ENCODE measurements at regions of chr16 and their contacts with region 1.

Region 1: GRCh38 chr16:57244767-57245471 is at the start of gene ARL2BP:
- DNase-seq: peak; percentile 99
- H3K4me3 Mint-ChIP-seq: peak within 1 kb of the TSS; percentile 89
- H3K27ac Mint-ChIP-seq: peak within 1 kb of the TSS; percentile 88
- H3K4me1 Mint-ChIP-seq: peaks cover 16% of the 10 kb centered on the region
- H3K27me3 Mint-ChIP-seq: no peaks in the 10 kb centered on the region
- total RNA-seq, gene ARL2BP: 16.4 to 16.9 TPM

Region 2: GRCh38 chr16:57084257-57084770 is 160.6 kb before region 1 on chr16:
- CTCF ChIA-PET with region 1: no interaction called
- POLR2A ChIA-PET with region 1: no interaction called
- intact Hi-C with region 1: loop called (anchors 2 kb)
- DNase-seq: peak; percentile 85
- H3K4me3 Mint-ChIP-seq: no peak overlapping the region
- H3K27ac Mint-ChIP-seq: no peak overlapping the region
- H3K4me1 Mint-ChIP-seq: peaks cover 6% of the 10 kb centered on the region
- H3K27me3 Mint-ChIP-seq: no peaks in the 10 kb centered on the region

Region 3: DNA sequence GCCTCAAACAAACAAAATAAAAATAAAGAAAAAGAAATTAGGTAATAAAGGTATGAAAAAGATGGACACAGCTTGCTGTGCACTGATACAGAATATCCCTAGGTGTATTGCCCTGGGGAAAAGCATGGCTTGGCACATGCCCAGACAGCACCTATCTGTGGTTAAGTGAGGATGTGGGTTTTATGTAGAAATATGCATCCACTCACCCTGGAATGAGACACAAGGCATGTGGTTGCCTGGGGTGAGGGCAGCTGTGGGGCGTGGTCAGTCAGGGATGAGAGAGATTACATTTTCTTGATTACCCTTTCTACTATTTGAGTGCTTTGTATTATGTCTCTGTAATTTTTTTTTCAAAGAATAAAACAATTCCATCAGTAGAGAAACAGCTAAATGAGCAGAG is 32.7 kb after region 1 on chr16:
- CTCF ChIA-PET with region 1: no interaction called
- POLR2A ChIA-PET with region 1: no interaction called
- intact Hi-C with region 1: loop called (anchors 5 kb)
- DNase-seq: peak; percentile 84
- H3K4me3 Mint-ChIP-seq: peak overlapping the region; percentile 20
- H3K27ac Mint-ChIP-seq: peak overlapping the region; percentile 5
- H3K4me1 Mint-ChIP-seq: peaks cover 22% of the 10 kb centered on the region
- H3K27me3 Mint-ChIP-seq: no peaks in the 10 kb centered on the region

Region 4: DNA sequence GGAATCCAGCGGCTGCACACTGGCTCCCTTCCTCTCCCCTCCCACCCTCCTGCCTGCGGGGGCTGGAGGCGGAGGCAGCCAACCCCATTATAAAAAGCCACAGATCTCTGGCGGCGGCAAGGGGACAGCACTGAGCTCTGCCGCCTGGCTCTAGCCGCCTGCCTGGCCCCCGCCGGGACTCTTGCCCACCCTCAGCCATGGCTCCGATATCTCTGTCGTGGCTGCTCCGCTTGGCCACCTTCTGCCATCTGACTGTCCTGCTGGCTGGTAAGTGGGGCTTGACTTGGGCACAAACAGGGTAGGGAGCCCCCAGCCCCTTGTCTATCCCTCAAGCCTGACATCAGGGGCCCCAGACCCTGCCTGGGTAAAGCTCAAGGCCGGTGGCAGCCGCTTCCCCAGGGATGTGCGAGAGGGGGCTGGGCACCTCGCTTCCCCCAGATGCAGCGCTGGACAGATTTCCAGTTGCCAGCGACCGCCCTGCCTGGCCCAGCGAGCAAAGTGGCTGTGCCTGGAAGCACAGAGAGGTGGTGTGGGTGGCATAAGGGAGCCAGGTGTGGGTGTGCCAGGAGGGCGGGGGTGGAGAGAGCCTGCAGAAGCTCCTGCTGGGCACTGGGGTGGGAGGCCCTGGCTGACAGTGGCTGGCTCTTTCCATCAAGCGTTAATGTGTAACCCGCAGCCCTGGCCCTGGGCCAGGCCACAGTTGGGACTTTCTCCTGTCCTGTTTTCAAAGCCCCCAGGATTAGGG is 127.6 kb after region 1 on chr16 and contains the start of gene CX3CL1:
- CTCF ChIA-PET with region 1: no interaction called
- POLR2A ChIA-PET with region 1: no interaction called
- intact Hi-C with region 1: no loop called
- DNase-seq: no peak
- H3K4me3 Mint-ChIP-seq: no peak within 1 kb of the TSS
- H3K27ac Mint-ChIP-seq: no peak within 1 kb of the TSS
- H3K4me1 Mint-ChIP-seq: peaks cover 9% of the 10 kb centered on the region
- H3K27me3 Mint-ChIP-seq: peaks cover 5% of the 10 kb centered on the region
- total RNA-seq, gene CX3CL1: not detected

Region 5: GRCh38 chr16:57422026-57422944 is 177.4 kb after region 1 on chr16:
- CTCF ChIA-PET with region 1: interaction called, 4 read pairs
- POLR2A ChIA-PET with region 1: interaction called, 3 read pairs
- intact Hi-C with region 1: loop called (anchors 1 kb)
- DNase-seq: no peak
- H3K4me3 Mint-ChIP-seq: no peak overlapping the region
- H3K27ac Mint-ChIP-seq: no peak overlapping the region
- H3K4me1 Mint-ChIP-seq: peaks cover 6% of the 10 kb centered on the region
- H3K27me3 Mint-ChIP-seq: no peaks in the 10 kb centered on the region

Region 6: GRCh38 chr16:57447186-57447962 is 202.5 kb after region 1 on chr16 and contains the starts of genes CIAPIN1 and COQ9:
- CTCF ChIA-PET with region 1: no interaction called
- POLR2A ChIA-PET with region 1: interaction called, 3 read pairs
- intact Hi-C with region 1: loop called (anchors 2 kb)
- DNase-seq: peak; percentile 96
- H3K4me3 Mint-ChIP-seq: peak within 1 kb of the TSS; percentile 91
- H3K27ac Mint-ChIP-seq: peak within 1 kb of the TSS; percentile 70
- H3K4me1 Mint-ChIP-seq: peaks cover 28% of the 10 kb centered on the region
- H3K27me3 Mint-ChIP-seq: no peaks in the 10 kb centered on the region
- total RNA-seq, gene CIAPIN1: 34.8 to 38.5 TPM
- total RNA-seq, gene COQ9: 29.8 to 33.0 TPM

Measured in activated CD4-positive, alpha-beta memory T cell treated with anti-CD3 and anti-CD28 coated beads for 36 hours (primary cell).